Posterior vena cava (tissue), 2 donors: ENCODE measurements at regions of chr6 and their contacts with region 1.

Region 1: DNA sequence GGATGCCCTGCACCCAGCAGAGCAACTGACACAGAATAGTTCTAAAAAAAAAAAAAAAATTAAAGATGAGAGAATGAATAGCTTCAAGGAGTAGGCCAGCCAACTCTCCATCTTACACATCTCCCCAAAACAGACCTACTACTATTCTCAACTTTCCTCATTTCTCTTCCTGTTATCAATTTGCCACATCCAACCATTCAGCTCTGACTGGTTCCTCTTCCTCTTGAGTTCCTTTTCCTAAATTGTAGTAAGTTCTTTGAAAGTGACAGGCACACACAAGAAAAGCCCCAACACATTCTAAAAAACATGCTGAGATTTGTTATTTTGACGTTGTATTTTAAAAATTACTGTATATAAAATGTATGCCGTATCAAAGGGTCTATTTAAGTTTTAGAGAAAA is 117.2 kb downstream of the PDSS2 start:
- DNase-seq: no peak

Region 2: GRCh38 chr6:107292715-107293271 is 49.4 kb before region 1 on chr6:
- intact Hi-C with region 1: loop called in 1 of 2 experiments (anchors 2 kb)
- DNase-seq: no peak